GM12878 (cell line): ENCODE measurements at regions of chr7 and their contacts with region 1.

Region 1: GRCh38 chr7:909358-910329 is 33.3 kb downstream of the GET4 start:
- DNase-seq: no peak
- ATAC-seq: peak; percentile 69
- H3K4me3 ChIP-seq: peak overlapping the region; percentile 51; the same call in 1 of the 2 replicates
- H3K27ac ChIP-seq: peak overlapping the region; percentile 38
- H3K4me1 ChIP-seq: peaks cover 16% of the 10 kb centered on the region
- H3K27me3 ChIP-seq: no peaks in the 10 kb centered on the region
- CTCF ChIP-seq: no peak
- EP300 ChIP-seq: no peak
- POLR2A ChIP-seq: no peak
- RAD21 ChIP-seq: no peak

Region 2: GRCh38 chr7:867672-868486 is 41.8 kb before region 1 on chr7:
- CTCF ChIA-PET with region 1: no interaction called
- POLR2A ChIA-PET with region 1: no interaction called
- RAD21 ChIA-PET with region 1: no interaction called
- SMC1A ChIA-PET with region 1: no interaction called
- in situ Hi-C with region 1: no loop called
- intact Hi-C with region 1: no loop called
- DNase-seq: no peak
- ATAC-seq: no peak
- H3K4me3 ChIP-seq: no peak overlapping the region
- H3K27ac ChIP-seq: no peak overlapping the region
- H3K4me1 ChIP-seq: no peaks in the 10 kb centered on the region
- H3K27me3 ChIP-seq: no peaks in the 10 kb centered on the region
- CTCF ChIP-seq: no peak
- EP300 ChIP-seq: no peak
- POLR2A ChIP-seq: no peak; the same call in 1 of the 2 replicates
- RAD21 ChIP-seq: no peak

Region 3: DNA sequence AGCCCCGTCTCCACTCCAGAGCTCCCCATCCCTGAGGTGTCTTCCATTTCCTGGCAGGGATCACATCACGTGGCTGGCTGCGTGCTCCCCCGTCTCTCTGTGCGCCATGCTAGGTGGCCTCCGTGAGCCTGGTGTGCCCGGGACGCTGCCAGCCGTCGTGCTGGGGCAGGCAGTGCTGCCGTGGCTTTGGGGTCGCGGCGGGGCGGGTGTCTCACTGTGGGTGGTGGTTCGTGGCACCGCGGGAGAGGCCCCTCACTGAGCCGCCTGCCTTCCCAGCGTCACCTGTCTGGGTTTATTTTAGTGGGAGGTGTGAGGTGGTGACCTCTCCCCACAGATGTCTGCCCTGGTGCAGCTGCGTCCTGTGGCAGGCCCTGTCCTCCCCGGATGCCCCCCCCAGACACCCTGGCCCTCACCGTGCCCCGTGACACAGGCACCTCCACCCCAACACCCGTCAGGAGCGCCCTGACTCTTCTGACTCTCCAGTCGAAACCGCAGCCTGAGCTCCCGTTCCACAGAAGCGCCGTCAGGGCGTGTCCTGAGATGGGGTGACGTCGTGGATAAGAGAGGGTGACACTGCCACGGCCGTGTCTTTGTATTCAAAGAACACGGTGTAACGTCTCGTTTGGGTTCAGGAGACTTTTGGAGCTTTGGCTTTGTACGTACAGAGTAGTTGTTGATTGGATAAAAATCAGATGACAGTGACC is 15.3 kb before region 1 on chr7:
- CTCF ChIA-PET with region 1: no interaction called
- POLR2A ChIA-PET with region 1: no interaction called
- RAD21 ChIA-PET with region 1: no interaction called
- SMC1A ChIA-PET with region 1: no interaction called
- in situ Hi-C with region 1: no loop called
- intact Hi-C with region 1: no loop called
- DNase-seq: no peak
- ATAC-seq: no peak; the same call in 2 of the 3 replicates
- H3K4me3 ChIP-seq: no peak overlapping the region
- H3K27ac ChIP-seq: no peak overlapping the region
- H3K4me1 ChIP-seq: no peaks in the 10 kb centered on the region
- H3K27me3 ChIP-seq: no peaks in the 10 kb centered on the region
- CTCF ChIP-seq: no peak
- EP300 ChIP-seq: no peak
- POLR2A ChIP-seq: peak; percentile 18; the same call in 1 of the 2 replicates
- RAD21 ChIP-seq: no peak

Region 4: DNA sequence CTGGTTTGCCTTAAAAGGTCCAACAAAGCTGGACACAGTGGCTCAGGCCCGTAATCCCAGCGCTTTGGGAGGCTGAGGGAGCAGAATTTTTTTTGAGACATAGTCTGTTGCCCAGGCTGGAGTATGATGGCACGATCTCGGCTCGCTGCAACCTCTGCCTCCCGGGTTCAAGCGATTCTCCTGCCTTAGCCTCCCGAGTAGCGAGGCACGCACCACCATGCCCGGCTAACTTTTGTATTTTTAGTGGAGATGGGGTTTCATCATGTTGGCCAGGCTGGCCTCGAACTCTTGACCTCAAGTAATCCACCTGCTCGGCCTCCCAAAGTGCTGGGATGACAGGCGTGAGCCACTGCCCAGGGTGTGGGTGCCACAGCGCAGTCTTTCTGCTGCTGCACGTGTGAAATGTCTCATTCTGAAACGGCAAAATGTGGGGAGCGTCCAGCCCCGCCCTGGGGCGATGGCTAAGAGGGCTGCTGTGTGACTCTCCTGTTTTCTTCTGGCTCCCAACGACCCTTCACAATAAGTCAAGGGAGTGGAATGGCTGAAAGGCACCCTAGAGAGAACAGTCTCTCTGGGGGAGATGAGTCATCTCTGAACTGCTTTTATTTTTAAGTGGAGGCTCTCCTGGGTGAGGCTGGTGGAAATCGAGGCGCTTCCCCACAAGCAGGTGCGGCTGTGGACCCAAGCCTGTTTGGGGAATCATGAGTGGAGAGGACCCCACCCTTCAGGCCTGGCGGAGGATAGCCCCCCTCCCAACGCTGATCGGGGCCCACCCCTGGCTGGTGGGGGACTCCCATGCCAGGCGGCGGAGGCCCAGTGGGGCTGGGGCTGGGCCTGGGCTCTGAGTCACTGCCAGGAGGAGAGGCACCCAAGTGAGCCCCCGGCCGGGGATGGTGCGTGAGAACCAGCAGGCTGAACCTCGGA is 26.7 kb after region 1 on chr7:
- CTCF ChIA-PET with region 1: interaction called, 4 read pairs
- POLR2A ChIA-PET with region 1: no interaction called
- RAD21 ChIA-PET with region 1: no interaction called
- SMC1A ChIA-PET with region 1: interaction called, 25 read pairs
- in situ Hi-C with region 1: no loop called
- intact Hi-C with region 1: loop called (anchors 1 kb)
- DNase-seq: peak; percentile 92
- ATAC-seq: peak; percentile 92
- H3K4me3 ChIP-seq: no peak overlapping the region; the same call in 1 of the 2 replicates
- H3K27ac ChIP-seq: peak overlapping the region; percentile 81
- H3K4me1 ChIP-seq: peaks cover 16% of the 10 kb centered on the region
- H3K27me3 ChIP-seq: no peaks in the 10 kb centered on the region
- CTCF ChIP-seq: no peak
- EP300 ChIP-seq: no peak
- POLR2A ChIP-seq: no peak; the same call in 1 of the 2 replicates
- RAD21 ChIP-seq: no peak

Region 5: GRCh38 chr7:949021-949934 is 39.6 kb after region 1 on chr7:
- CTCF ChIA-PET with region 1: interaction called, 31 read pairs
- POLR2A ChIA-PET with region 1: interaction called, 13 read pairs
- RAD21 ChIA-PET with region 1: interaction called, 18 read pairs
- SMC1A ChIA-PET with region 1: interaction called, 31 read pairs
- in situ Hi-C with region 1: no loop called
- intact Hi-C with region 1: loop called (anchors 1 kb)
- DNase-seq: no peak
- ATAC-seq: peak; percentile 51
- H3K4me3 ChIP-seq: 0 out of 2 replicates have a peak overlapping the region, but pooled peaks have one; percentile 2
- H3K27ac ChIP-seq: peak overlapping the region; percentile 67
- H3K4me1 ChIP-seq: peaks cover 24% of the 10 kb centered on the region
- H3K27me3 ChIP-seq: no peaks in the 10 kb centered on the region
- CTCF ChIP-seq: no peak
- EP300 ChIP-seq: no peak
- POLR2A ChIP-seq: no peak
- RAD21 ChIP-seq: no peak

Region 6: DNA sequence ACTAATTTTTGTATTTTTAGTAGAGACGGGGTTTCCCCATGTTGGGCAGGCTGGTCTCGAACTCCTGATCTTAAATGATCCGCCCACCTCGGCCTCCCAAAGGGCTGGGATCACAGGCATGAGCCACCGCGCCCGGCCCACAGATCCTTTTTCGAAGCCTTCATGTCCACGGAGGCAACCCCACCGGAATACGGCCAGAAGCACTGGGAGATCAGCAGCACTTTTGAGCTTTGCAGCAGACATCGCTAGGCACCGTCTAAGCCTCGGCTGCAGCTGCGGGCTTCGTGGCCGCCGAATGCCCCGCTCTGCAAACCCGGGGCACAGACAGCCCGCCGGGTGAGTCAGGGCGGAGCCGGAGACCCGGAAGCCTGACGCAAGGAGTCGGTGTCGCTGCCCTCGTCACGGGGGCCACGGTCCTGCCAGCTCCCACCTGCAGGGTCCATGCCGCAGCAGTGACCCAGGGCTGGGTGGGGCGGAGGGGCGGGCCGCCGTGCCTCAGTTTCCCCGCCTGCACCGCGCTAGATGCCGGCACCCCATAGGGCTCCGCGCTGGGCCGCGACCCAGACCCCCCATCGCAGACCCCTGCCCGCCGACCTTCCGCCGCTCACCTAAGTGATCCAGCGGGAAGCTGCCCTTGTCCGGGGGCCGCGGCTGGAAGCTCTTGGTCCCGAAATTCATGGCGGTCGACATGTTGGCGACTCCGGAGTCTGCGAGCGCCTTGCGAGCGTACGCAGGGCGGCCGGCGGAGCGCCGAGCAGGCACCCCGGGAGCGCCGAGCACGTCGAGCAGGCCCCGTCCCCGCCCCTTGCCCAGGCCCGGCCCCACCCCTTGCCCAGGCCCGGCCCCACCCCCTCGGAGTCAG is 65.4 kb after region 1 on chr7 and contains the start of gene COX19:
- CTCF ChIA-PET with region 1: interaction called, 9 read pairs
- POLR2A ChIA-PET with region 1: interaction called, 9 read pairs
- RAD21 ChIA-PET with region 1: interaction called, 15 read pairs
- SMC1A ChIA-PET with region 1: interaction called, 7 read pairs
- in situ Hi-C with region 1: no loop called
- intact Hi-C with region 1: no loop called
- DNase-seq: peak; percentile 42
- ATAC-seq: peak; percentile 87
- H3K4me3 ChIP-seq: peak within 1 kb of the TSS; percentile 78
- H3K27ac ChIP-seq: peak within 1 kb of the TSS; percentile 86
- H3K4me1 ChIP-seq: no peaks in the 10 kb centered on the region
- H3K27me3 ChIP-seq: no peaks in the 10 kb centered on the region
- CTCF ChIP-seq: no peak
- EP300 ChIP-seq: no peak
- POLR2A ChIP-seq: peak; percentile 94
- RAD21 ChIP-seq: no peak
- polyA plus RNA-seq, gene COX19: 3.7 to 6.6 TPM

Region 7: GRCh38 chr7:1386623-1387220 is 477.1 kb after region 1 on chr7:
- CTCF ChIA-PET with region 1: no interaction called
- POLR2A ChIA-PET with region 1: no interaction called
- RAD21 ChIA-PET with region 1: no interaction called
- SMC1A ChIA-PET with region 1: no interaction called
- in situ Hi-C with region 1: no loop called
- intact Hi-C with region 1: no loop called
- DNase-seq: no peak
- ATAC-seq: no peak
- H3K4me3 ChIP-seq: no peak overlapping the region
- H3K27ac ChIP-seq: no peak overlapping the region
- H3K4me1 ChIP-seq: no peaks in the 10 kb centered on the region
- H3K27me3 ChIP-seq: no peaks in the 10 kb centered on the region
- CTCF ChIP-seq: no peak
- EP300 ChIP-seq: no peak
- POLR2A ChIP-seq: no peak
- RAD21 ChIP-seq: no peak